ENCODE measurements at regions of chrX and their contacts with region 1.

Region 1: GRCh38 chrX:151151665-151152267 is 24.6 kb upstream of the GPR50 start:
- DNase-seq: peak in 1 of 5 donors; percentile 16
- ATAC-seq: peak in 3 of 4 donors; percentile 50 to 57 (median 56)
- H3K4me3 ChIP-seq: no peak overlapping the region
- H3K27ac ChIP-seq: no peak overlapping the region
- H3K4me1 ChIP-seq: no peaks in the 10 kb centered on the region
- H3K27me3 ChIP-seq: peaks cover 0 to 54% (median 0%) of the 10 kb centered on the region in 9 donors
- CTCF ChIP-seq: peak; percentile 55 to 82 (median 70)
- POLR2A ChIP-seq: no peak

Region 2: GRCh38 chrX:150258463-150259430 is 893.0 kb before region 1 on chrX:
- intact Hi-C with region 1: no loop called
- DNase-seq: no peak
- ATAC-seq: no peak
- H3K4me3 ChIP-seq: no peak overlapping the region
- H3K27ac ChIP-seq: no peak overlapping the region
- H3K4me1 ChIP-seq: no peaks in the 10 kb centered on the region
- H3K27me3 ChIP-seq: peaks cover 0 to 13% (median 0%) of the 10 kb centered on the region in 9 donors
- CTCF ChIP-seq: no peak
- POLR2A ChIP-seq: no peak

Region 3: DNA sequence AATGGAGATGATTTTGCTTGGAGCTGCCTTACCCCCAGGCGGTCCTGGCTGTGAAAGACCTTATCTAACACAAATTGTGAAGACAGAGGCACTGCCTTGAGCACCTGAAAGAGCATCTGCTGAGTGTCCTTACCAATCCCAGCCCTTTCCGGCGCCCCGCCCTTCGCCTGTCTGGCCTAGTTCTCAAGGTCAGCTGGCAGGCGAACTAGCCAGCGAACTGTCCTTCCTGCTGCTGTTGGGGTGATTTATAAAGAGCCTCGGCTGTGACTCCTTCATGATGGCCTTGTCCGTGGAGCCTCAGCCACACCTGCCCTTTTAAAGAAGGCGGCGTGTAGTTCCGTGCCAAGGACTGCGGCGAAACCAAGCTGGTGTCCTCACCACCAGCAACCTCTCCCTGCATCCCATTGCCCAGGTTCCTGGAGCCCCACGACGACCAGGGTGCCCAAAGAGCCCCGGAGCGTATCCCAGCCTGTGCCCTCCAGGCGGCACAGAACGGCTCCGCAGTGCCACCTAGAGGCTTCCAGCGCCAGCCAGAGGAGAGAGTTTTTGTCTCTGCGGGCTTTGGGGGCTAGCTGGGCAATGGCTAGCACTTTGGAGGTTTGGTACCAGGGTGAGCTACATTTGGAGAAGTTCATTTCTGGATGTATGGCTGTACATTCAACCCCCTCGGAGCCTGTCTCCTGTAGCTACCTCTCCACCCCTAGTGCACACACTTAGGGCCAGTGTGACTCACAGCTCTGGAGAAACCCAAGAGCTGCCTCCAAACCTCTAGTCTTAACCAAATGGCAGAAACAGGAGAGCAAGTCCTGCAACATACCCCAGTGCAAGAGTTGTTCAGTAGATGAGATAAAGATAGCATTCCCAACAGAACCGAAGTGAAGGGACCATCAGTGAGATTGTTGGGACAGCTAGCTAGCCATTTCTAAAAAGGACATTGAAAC is 208.4 kb after region 1 on chrX:
- intact Hi-C with region 1: loop called in 7 of 10 experiments (anchors 5 to 10 kb)
- DNase-seq: peak in 1 of 5 donors; percentile 44
- ATAC-seq: peak in 3 of 4 donors; percentile 58 to 77 (median 59)
- H3K4me3 ChIP-seq: peak overlapping the region in 2 of 12 donors; percentile 6 to 15
- H3K27ac ChIP-seq: no peak overlapping the region
- H3K4me1 ChIP-seq: no peaks in the 10 kb centered on the region
- H3K27me3 ChIP-seq: peaks cover 0 to 27% (median 0%) of the 10 kb centered on the region in 9 donors
- CTCF ChIP-seq: peak; percentile 25 to 60 (median 48)
- POLR2A ChIP-seq: no peak

Region 4: GRCh38 chrX:151680805-151681204 is 529.0 kb after region 1 on chrX:
- intact Hi-C with region 1: loop called (anchors 2 to 5 kb)
- DNase-seq: peak in 1 of 5 donors; percentile 25
- ATAC-seq: peak; percentile 37 to 69 (median 58)
- H3K4me3 ChIP-seq: no peak overlapping the region
- H3K27ac ChIP-seq: no peak overlapping the region
- H3K4me1 ChIP-seq: no peaks in the 10 kb centered on the region
- H3K27me3 ChIP-seq: peaks cover 0 to 21% (median 0%) of the 10 kb centered on the region in 9 donors
- CTCF ChIP-seq: peak; percentile 39 to 63 (median 52)
- POLR2A ChIP-seq: no peak

Region 5: DNA sequence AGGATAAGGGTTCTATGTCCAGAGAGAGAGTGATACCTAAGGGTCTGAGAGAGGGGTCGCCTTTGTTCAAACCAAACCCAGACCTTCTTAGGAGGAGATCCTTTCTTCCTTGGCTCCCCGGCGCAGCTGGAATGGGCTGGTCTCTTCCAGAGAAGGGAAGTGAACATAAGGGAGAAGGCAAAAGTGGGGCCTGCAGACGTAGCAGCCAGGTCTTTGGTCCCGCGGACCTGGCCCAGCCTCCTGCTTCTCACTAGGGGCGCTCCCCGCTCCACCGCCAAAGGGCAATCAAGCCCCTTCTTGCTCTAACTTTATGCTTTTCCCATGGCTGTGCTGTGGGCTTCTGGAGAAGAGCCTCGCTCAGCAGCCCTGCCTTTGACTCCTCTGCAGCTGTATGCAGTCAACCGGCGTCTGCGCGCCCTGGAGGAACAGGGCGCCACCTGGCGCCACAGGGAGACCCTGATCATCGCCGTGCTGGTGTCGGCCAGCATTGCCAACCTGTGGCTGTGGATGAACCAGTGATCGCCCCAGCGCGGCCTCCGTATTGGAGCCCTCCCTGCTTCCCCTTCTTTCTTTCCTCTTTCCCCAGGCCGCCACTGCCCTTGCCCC is 570.6 kb after region 1 on chrX:
- intact Hi-C with region 1: loop called in 3 of 10 experiments (anchors 5 kb)
- DNase-seq: peak in 3 of 5 donors; percentile 21 to 68 (median 46)
- ATAC-seq: peak in 3 of 4 donors; percentile 54 to 77 (median 55)
- H3K4me3 ChIP-seq: no peak overlapping the region
- H3K27ac ChIP-seq: peak overlapping the region in 6 of 12 donors; percentile 25 to 69 (median 52)
- H3K4me1 ChIP-seq: peaks cover 0 to 26% (median 2%) of the 10 kb centered on the region in 12 donors
- H3K27me3 ChIP-seq: peaks cover 0 to 2% (median 0%) of the 10 kb centered on the region in 9 donors
- CTCF ChIP-seq: peak in 10 of 12 donors; percentile 23 to 47 (median 36)
- POLR2A ChIP-seq: no peak